ENCODE measurements at regions of chr17 and their contacts with region 1.

Region 1: GRCh38 chr17:34199932-34200534 is 55.1 kb upstream of the CCL2 start:
- DNase-seq: peak; percentile 87
- ATAC-seq: peak; percentile 97
- H3K4me3 ChIP-seq: no peak overlapping the region
- H3K27ac ChIP-seq: no peak overlapping the region
- H3K4me1 ChIP-seq: no peaks in the 10 kb centered on the region
- H3K27me3 ChIP-seq: no peaks in the 10 kb centered on the region
- CTCF ChIP-seq: peak; percentile 100; the same call in 1 of the 2 replicates
- POLR2A ChIP-seq: peak; percentile 64
- RAD21 ChIP-seq: peak; percentile 100

Region 2: GRCh38 chr17:34095106-34095505 is 104.9 kb before region 1 on chr17:
- CTCF ChIA-PET with region 1: no interaction called
- POLR2A ChIA-PET with region 1: no interaction called
- dilution Hi-C with region 1: no loop called
- in situ Hi-C with region 1: no loop called
- intact Hi-C with region 1: no loop called
- DNase-seq: no peak
- ATAC-seq: no peak
- H3K4me3 ChIP-seq: no peak overlapping the region
- H3K27ac ChIP-seq: no peak overlapping the region
- H3K4me1 ChIP-seq: no peaks in the 10 kb centered on the region
- H3K27me3 ChIP-seq: no peaks in the 10 kb centered on the region
- CTCF ChIP-seq: no peak
- POLR2A ChIP-seq: no peak
- RAD21 ChIP-seq: no peak

Region 3: GRCh38 chr17:34156741-34157589 is 43.1 kb before region 1 on chr17:
- CTCF ChIA-PET with region 1: no interaction called
- POLR2A ChIA-PET with region 1: no interaction called
- dilution Hi-C with region 1: no loop called
- in situ Hi-C with region 1: no loop called
- intact Hi-C with region 1: no loop called
- DNase-seq: no peak
- ATAC-seq: peak; percentile 56
- H3K4me3 ChIP-seq: no peak overlapping the region; the same call in 1 of the 2 replicates
- H3K27ac ChIP-seq: no peak overlapping the region
- H3K4me1 ChIP-seq: no peaks in the 10 kb centered on the region
- H3K27me3 ChIP-seq: peaks cover 63% of the 10 kb centered on the region
- CTCF ChIP-seq: no peak
- POLR2A ChIP-seq: no peak
- RAD21 ChIP-seq: no peak

Region 4: DNA sequence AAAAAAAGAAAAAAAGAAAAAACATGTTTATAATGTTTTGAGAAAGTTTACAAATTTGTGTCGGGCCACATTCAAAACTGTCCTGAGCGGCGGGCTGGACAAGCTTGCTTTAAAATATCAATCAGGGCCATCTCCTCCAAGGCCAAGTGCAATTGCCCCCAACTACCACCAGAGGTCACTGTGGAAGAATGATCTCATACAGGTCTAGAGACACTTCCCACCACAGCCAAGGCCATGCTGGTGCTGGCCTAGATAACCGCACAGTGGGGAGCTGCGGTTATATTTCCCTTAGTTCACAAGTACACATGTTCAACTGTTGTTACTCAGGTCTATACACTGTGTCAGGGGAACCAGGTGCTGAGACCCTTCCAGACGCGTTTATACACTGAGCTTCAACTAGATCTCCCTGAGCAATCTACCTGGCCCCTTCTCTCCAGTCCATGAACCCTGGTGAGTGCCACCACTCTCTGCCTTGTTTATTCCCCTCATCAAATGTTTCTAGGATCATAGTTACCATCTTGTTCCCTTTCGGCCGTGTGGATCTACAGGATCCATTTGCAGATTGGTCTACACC is 28.7 kb before region 1 on chr17:
- CTCF ChIA-PET with region 1: interaction called, 4 read pairs
- POLR2A ChIA-PET with region 1: no interaction called
- dilution Hi-C with region 1: no loop called
- in situ Hi-C with region 1: no loop called
- intact Hi-C with region 1: loop called (anchors 2 kb)
- DNase-seq: peak; percentile 53
- ATAC-seq: peak; percentile 62
- H3K4me3 ChIP-seq: no peak overlapping the region
- H3K27ac ChIP-seq: no peak overlapping the region
- H3K4me1 ChIP-seq: peaks cover 7% of the 10 kb centered on the region
- H3K27me3 ChIP-seq: no peaks in the 10 kb centered on the region
- CTCF ChIP-seq: peak; percentile 68
- POLR2A ChIP-seq: no peak
- RAD21 ChIP-seq: peak; percentile 41

Region 5: GRCh38 chr17:34275881-34276280 is 75.8 kb after region 1 on chr17:
- CTCF ChIA-PET with region 1: interaction called, 8 read pairs
- POLR2A ChIA-PET with region 1: no interaction called
- dilution Hi-C with region 1: no loop called
- in situ Hi-C with region 1: loop called (anchors 10 kb)
- intact Hi-C with region 1: no loop called
- DNase-seq: peak; percentile 97
- ATAC-seq: peak; percentile 95
- H3K4me3 ChIP-seq: no peak overlapping the region
- H3K27ac ChIP-seq: no peak overlapping the region
- H3K4me1 ChIP-seq: peaks cover 2% of the 10 kb centered on the region
- H3K27me3 ChIP-seq: peaks cover 14% of the 10 kb centered on the region
- CTCF ChIP-seq: no peak
- POLR2A ChIP-seq: no peak
- RAD21 ChIP-seq: no peak

Region 6: DNA sequence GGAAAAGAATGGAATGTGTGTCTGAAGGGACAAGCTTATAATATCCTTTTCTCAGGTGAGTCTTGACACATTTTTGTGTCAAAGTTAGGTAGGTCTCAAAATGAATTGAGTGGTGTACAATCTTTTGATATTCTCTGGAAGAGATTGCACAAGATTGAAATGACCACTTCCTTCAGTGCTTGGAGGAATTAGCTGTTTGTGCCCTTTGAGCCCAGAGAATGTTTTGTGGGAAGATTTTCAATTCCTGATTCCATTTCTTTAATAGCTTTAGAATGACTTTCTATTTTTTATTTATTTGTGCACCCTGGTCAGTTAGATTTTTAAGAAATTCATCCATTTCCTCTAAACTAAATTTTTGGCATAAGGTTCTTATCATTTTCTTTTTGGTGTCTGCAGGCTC is 154.6 kb after region 1 on chr17:
- CTCF ChIA-PET with region 1: interaction called, 82 read pairs
- POLR2A ChIA-PET with region 1: no interaction called
- dilution Hi-C with region 1: no loop called
- in situ Hi-C with region 1: no loop called
- intact Hi-C with region 1: no loop called
- DNase-seq: peak; percentile 70
- ATAC-seq: peak; percentile 53
- H3K4me3 ChIP-seq: no peak overlapping the region
- H3K27ac ChIP-seq: peak overlapping the region; percentile 90; the same call in 1 of the 2 replicates
- H3K4me1 ChIP-seq: peaks cover 6% of the 10 kb centered on the region
- H3K27me3 ChIP-seq: no peaks in the 10 kb centered on the region
- CTCF ChIP-seq: no peak
- POLR2A ChIP-seq: no peak
- RAD21 ChIP-seq: no peak

Region 7: DNA sequence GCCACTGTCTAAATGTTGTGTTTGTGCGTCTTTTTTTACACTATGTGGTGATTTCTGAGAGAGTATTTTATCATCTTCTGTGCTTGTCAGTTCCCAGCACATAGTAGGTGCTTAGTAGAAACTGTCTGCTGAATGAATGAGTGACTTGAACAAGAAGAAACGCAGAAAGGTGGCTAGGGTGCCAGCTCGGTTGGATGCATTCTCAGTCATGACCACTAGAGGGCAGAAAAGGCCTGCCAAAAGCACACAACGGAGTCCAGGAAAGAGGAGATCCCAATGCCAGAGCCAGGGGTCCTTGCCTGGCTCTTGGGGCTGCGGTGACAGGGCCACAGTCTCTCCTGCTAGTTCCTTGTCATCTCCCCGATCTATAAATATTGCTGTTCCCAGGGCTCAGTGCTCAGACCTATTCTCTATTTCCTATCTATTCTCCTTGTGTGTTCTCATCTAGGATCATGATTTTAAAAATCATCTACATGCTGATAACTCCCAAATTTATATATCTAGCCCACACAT is 220.3 kb after region 1 on chr17:
- CTCF ChIA-PET with region 1: no interaction called
- POLR2A ChIA-PET with region 1: no interaction called
- dilution Hi-C with region 1: no loop called
- in situ Hi-C with region 1: no loop called
- intact Hi-C with region 1: loop called (anchors 1 kb)
- DNase-seq: peak; percentile 46
- ATAC-seq: peak; percentile 95
- H3K4me3 ChIP-seq: no peak overlapping the region
- H3K27ac ChIP-seq: no peak overlapping the region
- H3K4me1 ChIP-seq: no peaks in the 10 kb centered on the region
- H3K27me3 ChIP-seq: peaks cover 27% of the 10 kb centered on the region
- CTCF ChIP-seq: peak; percentile 85
- POLR2A ChIP-seq: no peak
- RAD21 ChIP-seq: peak; percentile 91

Region 8: GRCh38 chr17:34826332-34826731 is 626.3 kb after region 1 on chr17:
- CTCF ChIA-PET with region 1: no interaction called
- POLR2A ChIA-PET with region 1: no interaction called
- dilution Hi-C with region 1: no loop called
- in situ Hi-C with region 1: no loop called
- intact Hi-C with region 1: no loop called
- DNase-seq: no peak
- ATAC-seq: no peak
- H3K4me3 ChIP-seq: no peak overlapping the region
- H3K27ac ChIP-seq: no peak overlapping the region
- H3K4me1 ChIP-seq: no peaks in the 10 kb centered on the region
- H3K27me3 ChIP-seq: no peaks in the 10 kb centered on the region
- CTCF ChIP-seq: no peak
- POLR2A ChIP-seq: no peak
- RAD21 ChIP-seq: no peak

Measured in IMR-90 (cell line).